Activated CD4-positive, alpha-beta T cell treated with anti-CD3 and anti-CD28 coated beads, Interleukin-2, amount 10 ng/mL, durations not matched to agents 7 days and 5 days (primary cell): ENCODE measurements at regions of chr1 and their contacts with region 1.

Region 1: GRCh38 chr1:161192476-161193465 is 6.1 kb downstream of the ADAMTS4 start:
- DNase-seq: peak; percentile 81
- H3K4me3 Mint-ChIP-seq: no peak overlapping the region
- H3K27ac Mint-ChIP-seq: peak overlapping the region; percentile 87
- H3K4me1 Mint-ChIP-seq: peaks cover 46% of the 10 kb centered on the region
- H3K27me3 Mint-ChIP-seq: no peaks in the 10 kb centered on the region

Region 2: GRCh38 chr1:161082991-161083742 is 109.6 kb before region 1 on chr1:
- CTCF ChIA-PET with region 1: no interaction called
- POLR2A ChIA-PET with region 1: no interaction called
- DNase-seq: no peak
- H3K4me3 Mint-ChIP-seq: no peak overlapping the region
- H3K27ac Mint-ChIP-seq: no peak overlapping the region
- H3K4me1 Mint-ChIP-seq: no peaks in the 10 kb centered on the region
- H3K27me3 Mint-ChIP-seq: no peaks in the 10 kb centered on the region

Region 3: DNA sequence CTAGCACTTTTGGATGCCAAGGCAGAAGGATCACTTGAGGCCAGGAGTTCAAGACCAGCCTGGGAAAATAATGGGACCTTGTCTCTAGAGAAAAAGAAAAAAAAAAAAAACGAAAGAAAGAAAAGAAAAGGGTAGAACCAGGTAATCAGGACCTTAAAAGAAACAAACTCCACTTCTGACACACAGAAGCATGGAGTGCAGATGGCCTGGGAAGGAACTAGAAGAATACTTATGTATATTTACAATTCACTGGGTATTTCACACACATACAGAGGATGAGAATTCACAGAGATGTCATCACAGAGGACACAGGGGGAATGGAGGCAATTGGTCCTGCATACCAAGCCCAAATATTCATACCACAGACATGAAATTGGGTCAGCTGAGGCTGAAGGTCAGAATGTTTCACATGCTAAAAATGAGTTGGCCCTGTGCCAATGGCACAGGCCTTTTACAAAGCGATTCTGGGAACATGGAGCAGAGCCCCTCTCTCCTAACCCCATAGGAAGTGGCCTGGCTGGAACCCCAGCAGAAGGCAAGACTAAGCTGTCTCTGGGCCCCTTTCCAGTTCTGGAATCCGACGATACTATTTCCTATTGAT is 19.9 kb before region 1 on chr1:
- CTCF ChIA-PET with region 1: no interaction called
- POLR2A ChIA-PET with region 1: no interaction called
- DNase-seq: no peak
- H3K4me3 Mint-ChIP-seq: no peak overlapping the region
- H3K27ac Mint-ChIP-seq: no peak overlapping the region
- H3K4me1 Mint-ChIP-seq: peaks cover 47% of the 10 kb centered on the region
- H3K27me3 Mint-ChIP-seq: no peaks in the 10 kb centered on the region

Region 4: DNA sequence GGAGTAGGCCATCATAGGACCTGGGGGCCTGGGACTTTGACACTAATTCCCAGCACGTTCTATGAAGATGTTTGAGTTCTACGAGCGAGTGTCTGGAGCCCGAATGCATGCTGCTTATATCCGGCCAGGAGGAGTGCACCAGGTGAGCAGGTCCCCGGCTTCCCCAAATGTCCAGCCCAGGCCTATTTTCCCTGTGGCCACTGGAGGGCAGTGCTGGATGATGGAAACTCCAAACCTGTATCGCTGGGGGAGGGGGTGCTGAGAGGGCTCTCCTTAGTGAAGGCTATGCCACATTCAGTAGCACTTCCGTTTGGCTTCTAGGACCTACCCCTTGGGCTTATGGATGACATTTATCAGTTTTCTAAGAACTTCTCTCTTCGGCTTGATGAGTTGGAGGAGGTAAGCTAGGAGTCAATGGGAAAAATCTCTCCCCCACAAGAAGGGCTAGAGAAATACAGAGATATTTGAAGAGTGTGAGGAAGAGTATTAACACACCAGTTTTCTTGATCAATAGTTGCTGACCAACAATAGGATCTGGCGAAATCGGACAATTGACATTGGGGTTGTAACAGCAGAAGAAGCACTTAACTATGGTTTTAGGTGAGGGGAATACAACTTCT is 17.1 kb after region 1 on chr1:
- CTCF ChIA-PET with region 1: interaction called, 11 read pairs
- POLR2A ChIA-PET with region 1: no interaction called
- DNase-seq: peak; percentile 79
- H3K4me3 Mint-ChIP-seq: no peak overlapping the region
- H3K27ac Mint-ChIP-seq: no peak overlapping the region
- H3K4me1 Mint-ChIP-seq: peaks cover 48% of the 10 kb centered on the region
- H3K27me3 Mint-ChIP-seq: no peaks in the 10 kb centered on the region

Region 5: GRCh38 chr1:161238039-161238473 is 45.3 kb after region 1 on chr1 and contains the start of gene NR1I3:
- CTCF ChIA-PET with region 1: no interaction called
- POLR2A ChIA-PET with region 1: no interaction called
- DNase-seq: no peak
- H3K4me3 Mint-ChIP-seq: no peak within 1 kb of the TSS
- H3K27ac Mint-ChIP-seq: no peak within 1 kb of the TSS
- H3K4me1 Mint-ChIP-seq: no peaks in the 10 kb centered on the region
- H3K27me3 Mint-ChIP-seq: peaks cover 17% of the 10 kb centered on the region
- total RNA-seq, gene NR1I3: not detected

Region 6: DNA sequence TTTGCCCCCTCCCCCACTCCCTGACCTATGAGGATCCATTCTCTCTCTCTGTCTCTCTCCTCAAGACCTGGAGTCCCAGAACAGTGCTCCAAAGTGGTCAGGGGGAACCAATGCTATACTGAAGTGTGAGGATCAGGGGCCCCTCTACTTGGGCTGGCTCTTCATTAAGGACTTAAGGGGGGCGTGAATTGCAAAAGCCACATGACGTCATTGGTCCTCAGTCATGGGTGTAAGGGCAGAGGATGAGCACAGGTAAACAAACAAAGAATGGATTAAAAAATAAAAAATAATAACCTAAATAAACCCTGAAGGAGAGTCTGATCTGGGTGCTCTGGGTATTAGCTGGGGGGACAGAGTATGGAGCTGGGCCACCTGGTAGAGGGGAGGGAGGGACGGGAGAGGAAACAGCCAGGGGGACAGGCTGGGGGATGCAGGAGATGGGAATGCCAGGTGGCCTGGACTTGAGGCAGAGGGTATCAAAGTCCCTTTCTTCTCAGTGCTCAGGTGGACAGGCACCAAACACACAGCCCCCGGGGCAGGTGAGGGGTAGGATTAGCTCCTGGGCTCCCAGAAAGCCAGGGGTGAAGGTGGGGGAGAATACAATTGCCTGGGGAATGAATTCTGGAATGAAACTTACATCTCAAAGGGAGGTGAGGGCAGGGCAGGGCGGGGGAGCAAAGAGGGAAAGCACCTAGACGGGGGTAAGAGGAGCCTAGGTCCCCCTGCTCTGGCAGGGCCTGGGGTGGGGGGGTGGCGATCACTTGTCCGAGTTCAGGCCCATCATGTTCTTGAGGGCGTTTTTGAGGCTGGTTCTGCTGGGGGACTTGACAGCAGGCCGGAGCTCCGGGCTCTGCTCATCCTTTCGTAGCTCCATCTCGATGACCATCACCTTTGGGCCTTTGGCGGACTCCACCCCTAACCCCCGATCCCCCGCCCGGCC is 112.4 kb after region 1 on chr1:
- CTCF ChIA-PET with region 1: no interaction called
- POLR2A ChIA-PET with region 1: no interaction called
- DNase-seq: no peak
- H3K4me3 Mint-ChIP-seq: peak overlapping the region; percentile 100
- H3K27ac Mint-ChIP-seq: peak overlapping the region; percentile 98
- H3K4me1 Mint-ChIP-seq: peaks cover 38% of the 10 kb centered on the region
- H3K27me3 Mint-ChIP-seq: peaks cover 4% of the 10 kb centered on the region

Region 7: GRCh38 chr1:161382214-161383019 is 189.6 kb after region 1 on chr1:
- CTCF ChIA-PET with region 1: interaction called, 12 read pairs
- POLR2A ChIA-PET with region 1: no interaction called
- DNase-seq: no peak
- H3K4me3 Mint-ChIP-seq: no peak overlapping the region
- H3K27ac Mint-ChIP-seq: no peak overlapping the region
- H3K4me1 Mint-ChIP-seq: peaks cover 27% of the 10 kb centered on the region
- H3K27me3 Mint-ChIP-seq: no peaks in the 10 kb centered on the region